Left ventricle myocardium superior (tissue), 1 donor: ENCODE measurements at regions of chr18 and their contacts with region 1.

Region 1: GRCh38 chr18:40678318-40678717 is 1276.7 kb upstream of the PIK3C3 start:
- DNase-seq: no peak
- ATAC-seq: no peak

Region 2: GRCh38 chr18:40642692-40643229 is 35.6 kb before region 1 on chr18:
- intact Hi-C with region 1: loop called (anchors 2 kb)
- DNase-seq: no peak
- ATAC-seq: no peak

Region 3: DNA sequence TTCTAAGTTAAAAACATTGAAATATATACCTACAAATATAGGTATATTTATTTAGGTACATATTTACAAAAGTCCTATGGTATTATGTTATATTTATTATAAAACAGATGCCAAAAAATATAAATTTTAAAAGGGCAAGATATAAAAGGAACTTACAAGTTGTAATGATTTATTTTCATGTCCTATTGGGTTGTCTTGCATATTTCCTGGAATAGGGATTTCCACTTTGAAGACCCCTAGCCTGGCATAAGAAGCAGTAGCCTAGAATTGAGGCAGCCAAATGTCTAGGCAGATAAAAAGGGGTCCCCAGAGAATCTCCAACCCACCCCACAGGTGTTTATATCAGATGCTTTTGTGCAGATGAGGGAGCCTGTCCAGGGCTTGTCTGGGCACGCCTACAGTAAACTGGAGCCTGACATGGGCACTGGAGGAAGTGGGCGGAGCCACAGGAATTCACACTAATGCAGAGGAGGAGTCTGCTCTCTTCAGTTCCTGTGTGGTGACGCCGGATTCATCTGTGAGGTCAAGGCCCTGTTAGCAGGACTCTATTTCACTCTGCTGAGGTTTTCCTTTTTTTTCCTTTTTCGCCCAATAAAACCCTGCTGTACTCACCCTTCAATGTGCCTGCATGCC is 187.8 kb after region 1 on chr18:
- intact Hi-C with region 1: no loop called
- DNase-seq: no peak
- ATAC-seq: no peak